Naive thymus-derived CD4-positive, alpha-beta T cell (primary cell): ENCODE measurements at regions of chr12 and their contacts with region 1.

Region 1: DNA sequence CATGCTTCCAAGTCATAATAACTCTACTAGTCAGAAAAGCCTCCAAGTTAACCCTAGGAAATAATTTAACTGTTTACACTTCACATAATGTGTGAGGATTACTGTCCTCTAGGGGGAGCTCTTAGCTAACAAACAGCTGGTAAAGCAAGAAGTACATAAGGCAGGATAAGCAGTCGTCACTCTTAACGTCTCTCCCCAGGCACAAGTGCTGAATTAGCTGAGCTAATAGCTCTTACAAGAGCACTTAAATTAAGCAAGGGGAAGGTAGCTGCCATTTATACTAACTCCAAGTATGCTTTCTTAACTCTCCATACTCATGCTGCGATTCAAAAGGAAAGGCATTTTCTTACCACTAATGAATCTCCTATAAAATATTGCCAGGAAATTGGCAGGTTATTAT is 79.3 kb upstream of the TSPAN11 start:
- DNase-seq: peak in 6 of 9 donors; percentile 37 to 55 (median 41)
- ATAC-seq: peak; percentile 26
- H3K4me3 ChIP-seq: no peak overlapping the region
- H3K4me3 Mint-ChIP-seq: no peak overlapping the region
- H3K27ac ChIP-seq: no peak overlapping the region
- H3K27ac Mint-ChIP-seq: no peak overlapping the region
- H3K4me1 ChIP-seq: no peaks in the 10 kb centered on the region
- H3K4me1 Mint-ChIP-seq: peaks cover 5 to 13% (median 8%) of the 10 kb centered on the region in 7 donors
- H3K27me3 ChIP-seq: no peaks in the 10 kb centered on the region
- H3K27me3 Mint-ChIP-seq: peaks cover 0 to 13% (median 0%) of the 10 kb centered on the region in 5 donors

Region 2: DNA sequence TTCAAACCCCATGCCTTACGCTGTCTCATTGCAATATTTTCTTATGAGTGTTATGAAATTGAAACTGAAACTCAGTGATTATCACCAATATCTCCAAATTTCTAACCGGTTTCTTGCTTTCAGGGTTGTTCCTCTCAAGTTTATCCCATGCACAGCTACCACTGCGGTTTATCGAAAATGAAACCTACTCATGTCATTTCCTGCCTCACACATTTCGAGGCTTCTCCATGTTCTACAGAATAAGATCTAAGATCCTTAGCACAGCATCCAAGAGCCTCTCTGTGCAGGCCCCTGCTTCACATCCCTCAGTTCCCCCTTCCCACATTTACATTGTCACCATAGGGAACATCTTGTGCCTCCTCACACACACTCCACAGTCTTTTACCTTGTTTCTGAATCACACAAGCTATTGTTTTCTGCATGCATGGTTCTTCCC is 1743.7 kb before region 1 on chr12:
- CTCF ChIA-PET with region 1: no interaction called
- POLR2A ChIA-PET with region 1: no interaction called
- intact Hi-C with region 1: loop called in 1 of 2 experiments (anchors 5 kb)
- DNase-seq: peak in 8 of 9 donors; percentile 41 to 82 (median 76)
- ATAC-seq: peak; percentile 95
- H3K4me3 ChIP-seq: peak overlapping the region; percentile 21
- H3K4me3 Mint-ChIP-seq: peak overlapping the region; percentile 71 to 91 (median 78)
- H3K27ac ChIP-seq: peak overlapping the region; percentile 74
- H3K27ac Mint-ChIP-seq: peak overlapping the region; percentile 91 to 99 (median 97)
- H3K4me1 ChIP-seq: peaks cover 23 to 33% of the 10 kb centered on the region in 2 donors
- H3K4me1 Mint-ChIP-seq: peaks cover 30 to 54% (median 46%) of the 10 kb centered on the region in 7 donors
- H3K27me3 ChIP-seq: no peaks in the 10 kb centered on the region
- H3K27me3 Mint-ChIP-seq: peaks cover 0 to 23% (median 0%) of the 10 kb centered on the region in 5 donors

Region 3: DNA sequence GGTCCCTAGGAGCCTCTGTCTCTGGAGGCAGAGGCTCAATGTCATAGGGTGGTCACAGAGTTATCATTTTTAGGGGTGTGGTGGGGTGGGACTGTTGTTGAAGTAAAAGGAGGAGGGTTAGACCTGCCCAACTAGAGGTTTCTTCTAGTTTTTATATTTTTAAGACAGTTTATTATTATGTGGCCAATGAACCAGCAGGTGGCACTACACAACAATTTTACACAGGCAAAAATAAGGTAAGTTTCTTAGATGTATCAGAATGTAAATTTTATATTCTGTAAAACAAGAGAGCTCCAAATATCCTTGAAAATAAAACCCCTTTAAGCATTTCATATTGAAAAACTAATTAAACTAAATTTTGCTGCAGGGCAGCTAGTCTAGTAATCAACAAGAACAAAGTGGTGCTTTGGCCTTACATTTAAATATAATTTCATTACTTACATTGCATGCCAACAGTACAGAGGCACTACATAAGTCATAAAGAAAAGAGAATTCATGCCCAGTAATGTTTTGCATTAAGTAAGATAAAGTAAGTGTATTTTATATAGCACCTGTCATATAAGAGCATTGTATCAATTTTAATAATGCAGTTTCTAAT is 1327.6 kb before region 1 on chr12:
- CTCF ChIA-PET with region 1: no interaction called
- POLR2A ChIA-PET with region 1: no interaction called
- intact Hi-C with region 1: loop called (anchors 1 kb)
- DNase-seq: peak in 5 of 9 donors; percentile 10 to 34 (median 22)
- ATAC-seq: no peak
- H3K4me3 ChIP-seq: no peak overlapping the region
- H3K4me3 Mint-ChIP-seq: no peak overlapping the region
- H3K27ac ChIP-seq: no peak overlapping the region
- H3K27ac Mint-ChIP-seq: no peak overlapping the region
- H3K4me1 ChIP-seq: no peaks in the 10 kb centered on the region
- H3K4me1 Mint-ChIP-seq: no peaks in the 10 kb centered on the region
- H3K27me3 ChIP-seq: no peaks in the 10 kb centered on the region
- H3K27me3 Mint-ChIP-seq: peaks cover 2 to 11% (median 8%) of the 10 kb centered on the region in 5 donors

Region 4: DNA sequence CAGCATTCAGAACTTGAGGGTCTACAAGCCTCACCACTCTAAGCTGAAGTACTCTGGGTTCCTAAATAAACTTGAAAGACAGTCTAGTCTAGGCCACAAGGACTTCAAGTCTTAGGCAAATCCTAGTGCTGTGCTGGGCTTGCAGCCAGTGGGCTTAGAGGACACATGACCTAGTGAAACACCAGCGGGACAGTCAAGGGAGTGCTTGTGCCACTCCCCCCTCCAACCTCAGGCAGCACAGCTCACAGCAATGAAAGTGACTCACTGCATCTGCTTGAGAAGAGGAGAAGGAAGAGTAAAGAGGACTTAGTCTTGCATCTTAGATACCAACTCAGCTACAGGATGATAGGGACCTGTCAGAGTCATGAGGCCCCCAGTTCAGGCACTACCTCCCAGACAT is 589.6 kb before region 1 on chr12:
- CTCF ChIA-PET with region 1: no interaction called
- POLR2A ChIA-PET with region 1: no interaction called
- intact Hi-C with region 1: no loop called
- DNase-seq: no peak
- ATAC-seq: no peak
- H3K4me3 ChIP-seq: no peak overlapping the region
- H3K4me3 Mint-ChIP-seq: no peak overlapping the region
- H3K27ac ChIP-seq: no peak overlapping the region
- H3K27ac Mint-ChIP-seq: no peak overlapping the region
- H3K4me1 ChIP-seq: no peaks in the 10 kb centered on the region
- H3K4me1 Mint-ChIP-seq: no peaks in the 10 kb centered on the region
- H3K27me3 ChIP-seq: no peaks in the 10 kb centered on the region
- H3K27me3 Mint-ChIP-seq: no peaks in the 10 kb centered on the region

Region 5: DNA sequence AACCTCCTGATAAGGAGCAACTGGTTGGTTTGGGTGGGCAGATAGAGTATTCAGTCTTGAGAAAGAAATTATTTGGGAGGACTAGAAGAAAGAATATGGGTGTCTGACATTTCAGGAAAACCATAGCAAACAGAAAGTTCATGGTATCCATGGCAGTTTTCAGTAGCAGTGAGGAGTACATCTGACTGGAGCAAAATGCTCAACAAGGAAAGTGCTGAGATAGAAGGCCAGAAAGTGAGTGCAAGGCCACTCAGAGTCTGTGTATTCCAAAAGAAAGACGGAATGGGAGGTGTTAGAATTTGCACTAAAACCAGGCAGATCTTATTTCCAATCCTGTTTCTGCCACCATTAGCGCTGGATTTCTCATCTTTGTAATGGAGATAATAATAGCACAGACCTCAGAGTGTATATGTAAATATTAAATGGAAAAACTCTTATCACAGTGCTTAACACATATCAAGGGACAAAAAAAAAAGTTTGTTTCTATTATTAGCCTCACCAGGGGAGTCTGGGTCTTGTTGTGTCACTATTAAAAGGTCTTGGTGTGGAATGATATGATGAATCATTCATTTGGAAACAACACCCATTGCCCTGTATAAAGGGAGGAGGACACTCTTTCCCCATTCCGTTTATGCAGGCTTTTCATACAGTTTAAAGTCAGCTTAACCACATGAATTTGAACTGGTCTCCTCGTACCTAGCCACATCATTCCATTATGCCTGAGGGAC is 501.4 kb before region 1 on chr12:
- CTCF ChIA-PET with region 1: no interaction called
- POLR2A ChIA-PET with region 1: no interaction called
- intact Hi-C with region 1: no loop called
- DNase-seq: no peak
- ATAC-seq: no peak
- H3K4me3 ChIP-seq: no peak overlapping the region
- H3K4me3 Mint-ChIP-seq: no peak overlapping the region
- H3K27ac ChIP-seq: no peak overlapping the region
- H3K27ac Mint-ChIP-seq: no peak overlapping the region
- H3K4me1 ChIP-seq: no peaks in the 10 kb centered on the region
- H3K4me1 Mint-ChIP-seq: no peaks in the 10 kb centered on the region
- H3K27me3 ChIP-seq: no peaks in the 10 kb centered on the region
- H3K27me3 Mint-ChIP-seq: no peaks in the 10 kb centered on the region

Region 6: DNA sequence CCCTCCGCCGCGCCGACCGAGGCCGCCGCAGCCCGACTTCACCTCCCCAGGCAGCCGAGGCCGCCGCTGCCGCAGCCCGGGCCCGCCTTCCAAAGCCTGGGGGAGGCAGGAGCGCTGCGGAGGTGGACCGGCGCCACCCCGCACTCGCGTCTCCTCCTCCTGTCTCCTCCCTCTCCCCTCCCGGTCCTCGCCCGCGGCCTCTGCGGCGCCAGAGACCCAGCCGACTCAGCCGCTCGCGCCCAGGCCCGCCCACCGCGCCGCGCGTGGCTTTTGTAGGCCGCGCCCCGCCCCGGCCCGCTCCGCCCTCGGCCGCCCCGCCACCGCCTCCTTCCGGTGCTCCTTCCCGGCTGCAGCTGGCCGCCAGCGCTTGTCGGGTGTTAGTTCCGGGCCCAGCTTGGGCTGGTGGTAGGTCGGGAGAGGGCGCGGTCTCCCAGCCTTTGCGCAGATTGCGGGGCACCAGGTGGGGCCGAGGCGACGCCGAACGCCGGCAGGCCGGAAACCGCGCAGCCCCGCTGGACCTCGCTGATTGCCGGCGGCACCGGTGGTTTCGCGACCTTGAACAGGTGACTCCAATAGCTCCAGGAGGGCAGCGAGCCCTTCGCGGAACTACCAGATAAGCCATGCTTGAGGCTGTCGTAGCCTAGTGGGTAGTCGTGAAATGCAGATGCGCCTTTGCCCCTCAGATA is 92.4 kb before region 1 on chr12 and contains the start of gene CAPRIN2:
- CTCF ChIA-PET with region 1: no interaction called
- POLR2A ChIA-PET with region 1: no interaction called
- intact Hi-C with region 1: loop called (anchors 1 to 2 kb)
- DNase-seq: peak; percentile 89 to 97 (median 92)
- ATAC-seq: peak; percentile 96
- H3K4me3 ChIP-seq: peak within 1 kb of the TSS; percentile 67
- H3K4me3 Mint-ChIP-seq: peak within 1 kb of the TSS; percentile 93 to 99 (median 96)
- H3K27ac ChIP-seq: peak within 1 kb of the TSS; percentile 63
- H3K27ac Mint-ChIP-seq: peak within 1 kb of the TSS; percentile 80 to 93 (median 90)
- H3K4me1 ChIP-seq: peaks cover 13 to 29% of the 10 kb centered on the region in 2 donors
- H3K4me1 Mint-ChIP-seq: peaks cover 22 to 53% (median 46%) of the 10 kb centered on the region in 7 donors
- H3K27me3 ChIP-seq: no peaks in the 10 kb centered on the region
- H3K27me3 Mint-ChIP-seq: no peaks in the 10 kb centered on the region
- total RNA-seq, gene CAPRIN2: 13.7 to 50.1 (median 28.9) TPM

Region 7: DNA sequence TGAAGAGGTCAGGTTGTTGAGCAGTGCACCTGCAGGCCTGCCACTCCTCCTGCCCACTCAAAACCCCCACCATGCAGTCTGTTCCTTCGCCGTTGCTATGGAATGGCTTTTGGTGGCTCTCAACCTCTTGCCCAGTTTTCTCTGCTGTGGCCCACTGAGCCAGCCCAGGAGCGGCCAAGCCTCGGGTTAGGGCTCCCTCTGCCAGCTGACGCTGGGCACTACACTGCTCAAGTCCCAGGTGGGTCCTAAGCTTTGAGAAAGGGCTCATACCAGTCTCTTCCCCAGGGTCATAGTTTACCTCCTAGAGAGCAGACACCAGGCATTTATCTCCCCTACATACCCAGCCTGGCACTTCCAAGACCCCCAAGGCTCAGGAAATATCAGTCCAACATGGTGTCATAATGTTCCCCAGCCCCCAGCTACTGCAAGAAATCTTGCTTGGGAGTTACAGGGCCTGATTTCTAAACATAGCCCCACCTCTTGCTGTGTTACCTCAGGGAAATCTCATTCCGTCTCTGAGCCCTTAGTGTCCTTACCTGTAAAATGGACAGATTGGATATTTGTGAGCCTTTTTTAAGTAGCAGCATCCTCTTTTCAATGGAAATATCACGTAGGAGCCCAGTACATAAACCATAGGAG is 138.7 kb after region 1 on chr12:
- CTCF ChIA-PET with region 1: no interaction called
- POLR2A ChIA-PET with region 1: no interaction called
- intact Hi-C with region 1: loop called (anchors 1 to 5 kb)
- DNase-seq: peak in 1 of 9 donors; percentile 4
- ATAC-seq: no peak
- H3K4me3 ChIP-seq: no peak overlapping the region
- H3K4me3 Mint-ChIP-seq: no peak overlapping the region
- H3K27ac ChIP-seq: no peak overlapping the region
- H3K27ac Mint-ChIP-seq: no peak overlapping the region
- H3K4me1 ChIP-seq: no peaks in the 10 kb centered on the region
- H3K4me1 Mint-ChIP-seq: no peaks in the 10 kb centered on the region
- H3K27me3 ChIP-seq: no peaks in the 10 kb centered on the region
- H3K27me3 Mint-ChIP-seq: no peaks in the 10 kb centered on the region

Region 8: DNA sequence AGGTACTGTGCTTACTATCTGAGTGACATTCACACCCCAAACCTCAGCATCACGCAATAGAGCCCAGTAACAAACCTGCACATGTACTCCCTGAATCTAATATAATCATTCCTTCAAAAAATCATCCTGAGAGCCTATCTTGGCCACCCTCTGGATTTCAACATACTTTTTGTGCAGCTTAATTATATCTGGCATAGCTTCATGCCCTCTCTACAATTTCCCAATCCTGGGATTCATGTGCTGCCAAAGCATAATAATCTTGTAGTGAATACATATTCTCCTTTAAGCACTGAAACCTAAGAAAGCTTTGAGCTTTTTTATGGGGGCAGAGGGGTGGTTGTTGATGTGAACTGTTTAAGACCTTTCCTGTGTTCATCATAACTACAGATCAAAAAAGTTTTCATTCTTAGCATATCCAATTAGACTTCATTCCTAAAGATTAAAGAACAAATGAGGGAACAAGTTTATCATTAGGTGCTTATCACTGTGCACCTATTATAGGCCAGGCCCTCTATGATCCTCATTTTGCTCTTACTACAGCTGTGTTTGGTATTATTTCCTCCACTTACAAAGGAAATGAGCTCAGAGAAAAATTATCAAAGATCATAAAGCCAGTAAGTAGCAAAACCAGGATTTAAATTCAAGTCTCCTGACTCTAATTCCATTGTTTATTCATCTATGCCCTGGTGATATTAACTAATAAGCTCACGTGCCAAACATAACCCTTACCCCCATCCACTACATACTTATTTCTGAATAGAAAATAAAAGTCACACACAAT is 427.5 kb after region 1 on chr12:
- CTCF ChIA-PET with region 1: interaction called, 4 read pairs
- POLR2A ChIA-PET with region 1: no interaction called
- intact Hi-C with region 1: loop called (anchors 1 kb)
- DNase-seq: no peak
- ATAC-seq: no peak
- H3K4me3 ChIP-seq: no peak overlapping the region
- H3K4me3 Mint-ChIP-seq: no peak overlapping the region
- H3K27ac ChIP-seq: no peak overlapping the region
- H3K27ac Mint-ChIP-seq: peak overlapping the region in 5 of 9 donors; percentile 25 to 88 (median 51)
- H3K4me1 ChIP-seq: no peaks in the 10 kb centered on the region
- H3K4me1 Mint-ChIP-seq: peaks cover 0 to 7% (median 0%) of the 10 kb centered on the region in 7 donors
- H3K27me3 ChIP-seq: no peaks in the 10 kb centered on the region
- H3K27me3 Mint-ChIP-seq: no peaks in the 10 kb centered on the region

Region 9: DNA sequence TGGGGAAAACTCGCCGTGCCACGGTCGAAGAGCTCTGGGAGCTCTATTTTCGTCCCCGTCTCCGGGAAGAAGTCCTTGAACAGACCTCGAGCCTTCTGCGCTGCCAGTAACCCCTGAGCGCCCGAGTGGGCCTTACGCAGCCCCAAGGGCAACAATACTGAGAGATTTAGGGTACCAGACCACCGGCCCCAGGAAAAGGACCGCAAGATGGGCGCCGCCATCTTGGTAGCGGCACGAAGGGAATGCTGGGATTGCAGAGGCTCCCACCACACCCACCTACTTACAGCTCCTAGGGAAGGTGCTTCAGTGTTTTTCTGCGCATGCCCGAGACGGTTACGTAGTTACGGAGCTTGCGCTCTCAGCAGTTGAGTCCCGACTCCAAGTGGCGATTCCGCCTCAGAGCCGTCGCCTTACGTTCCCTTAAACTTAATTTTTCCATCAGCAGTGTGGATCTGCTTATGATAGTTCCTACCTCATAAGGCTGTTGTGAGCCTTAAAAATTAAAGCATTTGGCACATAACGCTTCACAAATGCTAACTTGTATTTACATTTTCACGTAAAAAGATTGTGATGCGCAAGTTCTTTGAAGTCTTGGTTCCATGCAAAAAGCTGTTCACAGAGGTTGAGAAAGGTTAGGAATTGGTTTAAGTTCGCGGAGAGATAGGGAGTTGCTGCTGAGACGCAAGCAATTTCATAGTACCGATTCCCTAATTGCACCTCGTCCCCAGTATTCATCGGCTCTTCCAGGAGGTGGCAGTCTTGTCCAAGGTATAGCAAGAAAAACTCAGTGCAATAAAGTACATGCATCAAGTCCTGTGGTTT is 1908.6 kb after region 1 on chr12 and contains the start of gene YARS2:
- CTCF ChIA-PET with region 1: no interaction called
- POLR2A ChIA-PET with region 1: no interaction called
- intact Hi-C with region 1: loop called in 1 of 2 experiments (anchors 10 kb)
- DNase-seq: peak; percentile 62 to 86 (median 83)
- ATAC-seq: peak; percentile 92
- H3K4me3 ChIP-seq: peak within 1 kb of the TSS; percentile 68
- H3K4me3 Mint-ChIP-seq: peak within 1 kb of the TSS; percentile 84 to 99 (median 90)
- H3K27ac ChIP-seq: peak within 1 kb of the TSS; percentile 76
- H3K27ac Mint-ChIP-seq: peak within 1 kb of the TSS; percentile 81 to 99 (median 94)
- H3K4me1 ChIP-seq: peaks cover 13% of the 10 kb centered on the region in 2 donors
- H3K4me1 Mint-ChIP-seq: peaks cover 0 to 21% (median 20%) of the 10 kb centered on the region in 7 donors
- H3K27me3 ChIP-seq: no peaks in the 10 kb centered on the region
- H3K27me3 Mint-ChIP-seq: peaks cover 0 to 4% (median 0%) of the 10 kb centered on the region in 5 donors
- total RNA-seq, gene YARS2: 11.3 to 24.0 (median 17.9) TPM